CD4-positive, alpha-beta memory T cell (primary cell): ENCODE measurements at regions of chr5 and their contacts with region 1.

Region 1: DNA sequence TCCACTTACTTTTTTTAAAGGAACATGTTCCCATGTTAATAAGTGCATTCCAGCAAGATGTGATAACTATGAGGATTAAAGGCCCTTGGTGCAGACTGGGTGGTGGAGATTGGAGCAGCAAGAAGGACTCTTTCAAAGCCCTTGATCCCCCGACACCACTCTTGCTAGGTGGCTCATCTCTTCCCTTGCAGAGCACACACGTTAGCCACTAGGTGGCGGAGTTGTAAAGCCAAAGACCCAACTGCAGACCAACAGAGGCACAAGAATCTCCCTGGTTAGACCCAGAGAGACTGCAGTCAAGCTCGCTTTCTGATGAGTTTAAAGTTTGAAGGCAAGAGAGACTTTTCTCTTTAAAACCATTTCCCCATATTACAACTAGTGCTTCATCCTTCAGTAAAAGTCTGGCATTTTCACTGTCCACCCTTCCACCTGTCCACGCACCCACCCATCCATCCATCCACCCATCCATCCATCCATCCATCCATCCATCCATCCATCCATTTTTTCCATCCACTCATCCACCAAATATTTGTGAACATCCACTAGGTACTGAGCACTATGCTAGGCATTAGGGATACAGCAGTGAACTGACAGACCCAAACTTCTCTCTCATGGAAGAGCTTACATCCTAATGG is 226.9 kb downstream of the MSX2 start:
- DNase-seq: peak; percentile 47 to 61 (median 52)
- H3K4me3 ChIP-seq: no peak overlapping the region
- H3K4me3 Mint-ChIP-seq: no peak overlapping the region
- H3K27ac ChIP-seq: no peak overlapping the region
- H3K27ac Mint-ChIP-seq: no peak overlapping the region
- H3K4me1 ChIP-seq: no peaks in the 10 kb centered on the region
- H3K4me1 Mint-ChIP-seq: no peaks in the 10 kb centered on the region
- H3K27me3 ChIP-seq: no peaks in the 10 kb centered on the region
- H3K27me3 Mint-ChIP-seq: peaks cover 9 to 11% of the 10 kb centered on the region in 2 donors

Region 2: DNA sequence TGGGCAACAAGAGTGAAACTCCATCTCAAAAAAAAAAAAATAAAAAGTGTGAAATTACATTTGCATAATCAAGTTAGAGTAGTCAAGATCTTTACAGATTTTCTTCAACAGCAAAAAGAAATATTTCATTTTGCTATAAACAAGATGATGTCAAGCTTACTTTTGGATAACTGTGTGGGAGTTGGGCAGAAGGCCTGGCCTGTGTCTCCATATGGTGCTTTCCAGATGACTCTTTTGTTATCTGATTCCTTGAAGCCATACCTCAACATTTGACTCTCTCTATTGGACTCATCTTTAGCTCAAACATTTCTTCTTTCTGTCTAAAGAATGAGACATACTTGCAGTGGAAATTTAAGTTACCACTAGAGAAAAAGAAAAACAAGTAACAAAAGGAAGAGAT is 19.9 kb after region 1 on chr5:
- CTCF ChIA-PET with region 1: interaction called, 11 read pairs
- POLR2A ChIA-PET with region 1: no interaction called
- intact Hi-C with region 1: no loop called
- DNase-seq: no peak
- H3K4me3 ChIP-seq: no peak overlapping the region
- H3K4me3 Mint-ChIP-seq: peak overlapping the region in 1 of 8 donors; percentile 26
- H3K27ac ChIP-seq: no peak overlapping the region
- H3K27ac Mint-ChIP-seq: no peak overlapping the region
- H3K4me1 ChIP-seq: no peaks in the 10 kb centered on the region
- H3K4me1 Mint-ChIP-seq: no peaks in the 10 kb centered on the region
- H3K27me3 ChIP-seq: no peaks in the 10 kb centered on the region
- H3K27me3 Mint-ChIP-seq: peaks cover 4 to 14% of the 10 kb centered on the region in 2 donors

Region 3: DNA sequence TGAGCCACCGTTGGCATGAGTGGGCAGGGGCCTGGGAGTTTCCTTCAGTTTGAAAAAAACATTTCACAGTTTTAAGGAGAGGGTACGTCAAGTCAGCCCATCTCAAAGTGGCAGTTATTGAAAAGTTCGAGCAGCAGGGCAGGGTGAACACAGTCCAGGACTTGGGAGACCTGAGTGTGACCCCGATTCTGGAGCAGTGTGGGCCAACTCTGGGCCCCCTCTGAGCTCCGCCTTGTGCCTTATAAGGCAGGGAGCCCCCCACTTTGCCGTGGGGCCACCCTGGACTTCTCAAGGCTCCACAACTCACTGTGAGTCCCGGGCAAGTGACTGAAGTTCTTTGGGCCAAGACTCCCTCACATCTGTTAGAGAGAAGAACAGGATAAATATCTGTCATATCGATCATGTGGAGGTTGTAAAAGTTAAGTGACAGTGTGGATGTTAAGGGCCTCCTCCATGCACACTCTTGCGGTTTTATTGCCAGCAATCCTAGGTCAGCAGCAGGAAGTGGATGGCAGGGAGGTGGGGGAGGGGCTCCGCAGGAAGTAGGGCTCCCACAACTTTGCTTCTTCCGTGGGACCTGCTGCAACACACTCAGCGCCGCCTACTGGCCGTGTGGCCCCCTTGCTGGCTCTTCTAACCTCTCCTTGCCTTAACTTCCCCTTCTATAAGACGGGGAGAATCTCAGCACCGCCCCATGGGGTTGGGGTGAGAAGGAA is 745.0 kb after region 1 on chr5:
- CTCF ChIA-PET with region 1: no interaction called
- POLR2A ChIA-PET with region 1: no interaction called
- intact Hi-C with region 1: loop called (anchors 1 kb)
- DNase-seq: peak; percentile 65 to 70 (median 66)
- H3K4me3 ChIP-seq: no peak overlapping the region
- H3K4me3 Mint-ChIP-seq: peak overlapping the region; percentile 15 to 76 (median 64)
- H3K27ac ChIP-seq: no peak overlapping the region
- H3K27ac Mint-ChIP-seq: peak overlapping the region; percentile 73 to 91 (median 83)
- H3K4me1 ChIP-seq: peaks cover 16% of the 10 kb centered on the region
- H3K4me1 Mint-ChIP-seq: peaks cover 13 to 34% (median 23%) of the 10 kb centered on the region in 4 donors
- H3K27me3 ChIP-seq: no peaks in the 10 kb centered on the region
- H3K27me3 Mint-ChIP-seq: no peaks in the 10 kb centered on the region

Region 4: DNA sequence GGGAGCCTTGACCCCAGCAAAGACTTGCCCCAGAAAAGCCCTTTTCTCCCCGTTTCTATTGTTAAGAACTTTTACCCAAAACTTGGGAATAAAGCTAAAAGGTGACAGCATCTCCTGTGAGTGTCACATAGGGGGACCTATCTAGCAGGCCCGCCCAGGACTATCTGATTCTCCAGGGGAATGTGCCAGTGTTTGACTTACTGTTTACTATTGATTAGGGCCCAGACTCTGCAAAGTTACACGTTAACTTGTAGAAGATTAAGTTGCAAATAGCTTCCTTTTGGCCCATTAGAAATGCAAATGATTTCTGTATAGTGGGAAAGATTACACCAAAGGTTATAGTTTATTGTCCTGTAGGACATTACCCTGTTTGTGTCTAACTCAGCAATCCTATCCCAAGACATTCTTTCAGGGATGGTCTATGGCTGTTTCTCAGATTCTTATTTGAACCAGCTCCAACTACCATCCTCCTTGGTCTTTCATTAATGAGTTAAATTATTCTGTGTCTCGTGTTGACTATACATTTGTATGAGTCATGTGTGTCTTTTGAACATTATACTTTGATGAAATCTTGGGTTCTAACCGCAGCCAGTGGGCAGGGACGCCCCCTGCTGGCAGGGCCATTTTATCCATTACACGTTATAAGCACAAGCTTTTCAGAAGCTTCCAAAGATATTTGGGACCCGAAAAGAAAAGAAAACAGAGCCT is 767.3 kb after region 1 on chr5:
- CTCF ChIA-PET with region 1: interaction called, 5 read pairs
- POLR2A ChIA-PET with region 1: no interaction called
- intact Hi-C with region 1: loop called (anchors 2 kb)
- DNase-seq: peak; percentile 33 to 47 (median 42)
- H3K4me3 ChIP-seq: no peak overlapping the region
- H3K4me3 Mint-ChIP-seq: no peak overlapping the region
- H3K27ac ChIP-seq: no peak overlapping the region
- H3K27ac Mint-ChIP-seq: no peak overlapping the region
- H3K4me1 ChIP-seq: no peaks in the 10 kb centered on the region
- H3K4me1 Mint-ChIP-seq: peaks cover 0 to 1% (median 0%) of the 10 kb centered on the region in 4 donors
- H3K27me3 ChIP-seq: no peaks in the 10 kb centered on the region
- H3K27me3 Mint-ChIP-seq: peaks cover 0 to 2% of the 10 kb centered on the region in 2 donors